Left cardiac atrium (tissue), 4 donors: ENCODE measurements at regions of chr10 and their contacts with region 1.

Region 1: GRCh38 chr10:21495752-21496342 is 29.6 kb downstream of the SKIDA1 start:
- DNase-seq: peak; percentile 88
- ATAC-seq: peak; percentile 80 to 87

Region 2: DNA sequence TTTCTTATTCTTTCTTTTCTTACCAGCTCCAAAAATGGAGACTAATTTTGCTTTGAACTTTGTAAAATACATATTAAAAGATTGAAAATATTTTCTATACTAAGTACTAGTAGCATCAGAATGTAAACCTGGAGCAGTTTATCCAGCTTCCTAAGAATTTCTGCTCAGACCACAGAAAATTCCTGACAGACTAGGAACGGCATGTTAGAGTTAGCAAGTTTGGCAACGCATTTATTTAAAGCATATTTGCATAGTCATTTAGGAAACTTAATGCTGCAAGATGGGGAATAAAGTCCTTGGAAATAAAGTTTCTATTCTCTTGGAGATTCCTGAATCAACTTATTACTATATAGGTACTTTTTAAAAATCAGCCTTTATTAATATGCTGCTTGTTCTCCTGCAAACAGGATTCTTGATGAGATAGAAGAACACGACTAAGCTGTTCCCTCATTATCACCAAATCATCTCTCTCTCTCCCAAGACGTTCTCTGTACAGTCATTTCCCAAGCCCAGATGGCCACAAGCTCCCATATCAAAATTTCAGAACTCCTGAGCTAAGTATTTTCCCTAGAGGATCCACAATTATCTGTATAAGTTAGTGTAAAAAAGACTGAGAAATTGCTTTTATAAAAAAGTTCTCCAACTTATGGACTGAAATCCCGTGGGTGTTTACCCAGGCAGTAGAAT is 292.9 kb before region 1 on chr10:
- intact Hi-C with region 1: no loop called
- DNase-seq: no peak
- ATAC-seq: no peak

Region 3: DNA sequence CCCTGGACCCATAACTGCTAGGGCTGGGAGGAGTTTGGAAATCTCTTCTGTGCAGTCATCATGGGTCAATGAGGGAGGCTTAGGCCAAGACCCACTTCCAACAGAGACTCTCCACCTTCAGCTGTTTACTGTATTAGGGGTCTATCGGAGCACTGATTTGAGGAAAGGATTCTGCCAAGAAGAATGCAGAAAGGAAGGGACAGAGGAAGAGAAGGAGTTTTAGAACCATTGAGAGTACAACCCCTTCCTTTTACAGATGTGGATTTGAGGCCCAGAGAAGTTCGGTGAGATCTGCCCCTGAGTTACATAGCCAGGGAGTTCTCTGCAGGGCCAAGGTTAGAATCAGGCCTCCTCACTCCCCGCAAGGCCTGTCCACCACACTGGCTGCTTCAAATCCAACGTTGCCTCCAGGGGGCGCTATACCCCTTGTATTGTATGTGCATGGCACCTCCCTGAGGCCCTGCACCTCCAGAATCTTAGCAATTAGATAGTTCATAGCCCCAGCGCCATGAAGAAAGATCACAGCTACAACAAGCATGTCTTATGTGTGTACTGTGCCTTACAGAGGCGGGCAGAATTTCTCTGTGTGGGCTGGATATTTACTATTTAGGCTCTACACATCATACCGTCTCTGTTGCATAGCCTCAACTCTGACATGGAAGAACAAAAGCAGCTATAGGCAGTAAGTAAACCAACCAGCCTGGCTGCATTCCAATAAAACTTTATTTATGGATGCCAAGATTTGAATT is 217.2 kb before region 1 on chr10:
- intact Hi-C with region 1: loop called (anchors 2 to 5 kb)
- DNase-seq: peak; percentile 97
- ATAC-seq: peak; percentile 97 to 99

Region 4: DNA sequence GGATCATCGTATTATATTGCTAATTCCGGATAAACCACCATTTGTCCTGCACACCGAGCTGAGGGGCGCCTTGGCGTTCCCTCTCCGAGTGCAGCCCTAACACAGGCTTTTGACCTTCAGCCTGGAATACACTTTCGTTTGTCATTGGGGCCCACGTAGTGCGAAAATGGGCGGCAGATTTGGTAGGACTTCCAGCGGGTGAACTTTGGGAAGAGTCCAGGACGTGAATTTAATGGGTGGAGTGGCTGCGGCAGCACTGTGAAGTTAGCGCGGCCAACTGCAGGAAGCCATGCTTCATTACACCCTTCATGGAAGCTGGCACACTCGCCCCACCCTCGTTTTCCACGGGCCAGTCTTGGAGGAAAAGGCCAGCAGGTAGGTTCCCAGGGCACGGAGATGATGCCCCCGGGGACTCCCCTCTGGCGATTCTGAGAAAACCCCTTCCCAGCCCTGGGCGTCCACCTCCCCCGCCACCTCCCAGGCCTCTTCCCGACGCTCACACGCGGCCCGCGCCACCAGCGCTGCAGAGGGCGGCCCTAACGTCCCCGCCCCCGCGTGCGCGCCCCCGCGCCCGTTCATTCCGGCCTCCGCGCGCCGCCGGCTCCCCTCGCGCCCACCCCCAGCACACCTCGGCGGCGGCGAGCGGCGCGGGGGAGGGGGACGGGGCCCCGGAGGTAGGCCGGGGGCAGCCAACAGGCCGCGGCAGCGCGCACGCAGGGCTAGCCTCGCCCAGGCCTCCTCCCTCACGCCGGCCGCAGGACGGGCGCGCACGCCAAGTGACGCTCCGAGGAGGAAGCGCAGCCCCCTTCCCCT is 37.8 kb after region 1 on chr10 and contains the start of gene MLLT10:
- intact Hi-C with region 1: loop called in 1 of 2 experiments (anchors 5 kb)
- DNase-seq: peak; percentile 95
- ATAC-seq: peak; percentile 95 to 98
- total RNA-seq, gene MLLT10: 26.1 to 30.3 TPM

Region 5: GRCh38 chr10:21572578-21572977 is 76.7 kb after region 1 on chr10:
- intact Hi-C with region 1: no loop called
- DNase-seq: peak; percentile 48
- ATAC-seq: peak; percentile 59 to 82

Region 6: GRCh38 chr10:21732067-21732772 is 236.4 kb after region 1 on chr10:
- intact Hi-C with region 1: loop called (anchors 2 to 10 kb)
- DNase-seq: peak; percentile 74
- ATAC-seq: peak; percentile 93 to 94

Region 7: GRCh38 chr10:21953585-21954057 is 457.8 kb after region 1 on chr10:
- intact Hi-C with region 1: loop called in 1 of 2 experiments (anchors 10 kb)
- DNase-seq: no peak
- ATAC-seq: peak; percentile 21 to 44

Region 8: GRCh38 chr10:21969326-21970287 is 473.8 kb after region 1 on chr10:
- intact Hi-C with region 1: loop called in 1 of 2 experiments (anchors 10 kb)
- DNase-seq: no peak
- ATAC-seq: no peak